H1 (cell line): ENCODE measurements at regions of chr2 and their contacts with region 1.

Region 1: GRCh38 chr2:178414266-178415247 is 36.4 kb downstream of the PRKRA start:
- DNase-seq: peak; percentile 66 to 88
- H3K4me3 ChIP-seq: peak overlapping the region; percentile 42 to 75 (median 62)
- H3K27ac ChIP-seq: no peak overlapping the region
- H3K4me1 ChIP-seq: peaks cover 0 to 2% (median 0%) of the 10 kb centered on the region in 4 experiments; a peak in 1 of 7 replicates
- H3K27me3 ChIP-seq: no peaks in the 10 kb centered on the region
- CTCF ChIP-seq: peak; percentile 91 to 97 (median 93)
- EP300 ChIP-seq: no peak
- POLR2A ChIP-seq: peak in 1 of 2 experiments; percentile 61; a peak in 2 of 3 replicates
- RAD21 ChIP-seq: peak; percentile 85 to 88

Region 2: GRCh38 chr2:178128836-178129630 is 285.5 kb before region 1 on chr2:
- CTCF ChIA-PET with region 1: interaction called, 31 read pairs
- POLR2A ChIA-PET with region 1: no interaction called
- DNase-seq: no peak
- H3K4me3 ChIP-seq: no peak overlapping the region
- H3K27ac ChIP-seq: no peak overlapping the region
- H3K4me1 ChIP-seq: peaks cover 0 to 4% (median 2%) of the 10 kb centered on the region in 4 experiments; a peak in 4 of 7 replicates
- H3K27me3 ChIP-seq: no peaks in the 10 kb centered on the region
- CTCF ChIP-seq: no peak
- EP300 ChIP-seq: no peak
- POLR2A ChIP-seq: no peak
- RAD21 ChIP-seq: no peak

Region 3: DNA sequence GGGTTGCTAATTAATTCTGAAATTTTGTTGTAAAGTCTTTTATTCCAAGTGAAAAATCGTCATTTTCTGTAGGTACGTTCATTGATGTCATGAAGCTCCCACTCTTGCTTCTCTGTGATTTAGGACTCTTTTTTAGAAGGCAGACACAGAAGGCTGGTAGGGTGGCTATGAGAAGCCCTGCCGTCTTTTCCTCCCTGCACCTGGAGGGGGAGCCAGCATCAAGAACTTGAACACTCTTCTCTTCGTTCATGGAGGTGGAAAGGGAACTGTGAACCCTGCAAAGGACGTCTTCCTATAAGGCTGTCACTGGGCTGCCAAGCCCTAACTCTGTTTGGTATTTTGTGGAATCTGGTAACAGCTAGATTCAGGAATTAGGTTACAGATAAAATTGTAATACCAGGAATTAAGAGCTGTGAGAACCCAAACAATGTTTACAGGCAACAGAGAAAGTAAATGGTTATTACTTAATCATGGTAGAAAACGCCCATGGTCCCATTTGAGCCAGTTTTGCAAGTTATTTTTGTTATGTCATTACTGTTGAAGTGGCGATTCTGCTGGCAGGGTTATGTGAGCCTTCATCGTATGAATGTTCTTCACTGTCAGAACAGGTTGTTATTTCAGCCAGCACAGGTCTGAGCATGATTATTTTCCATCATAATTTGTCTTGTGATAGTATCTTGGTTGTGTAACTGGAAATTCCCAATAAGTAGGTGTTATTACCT is 108.0 kb before region 1 on chr2:
- CTCF ChIA-PET with region 1: interaction called, 10 read pairs
- POLR2A ChIA-PET with region 1: interaction called, 3 read pairs
- DNase-seq: peak; percentile 15 to 72
- H3K4me3 ChIP-seq: no peak overlapping the region
- H3K27ac ChIP-seq: no peak overlapping the region
- H3K4me1 ChIP-seq: no peaks in the 10 kb centered on the region; a peak in 1 of 7 replicates
- H3K27me3 ChIP-seq: no peaks in the 10 kb centered on the region
- CTCF ChIP-seq: peak; percentile 70 to 86 (median 75)
- EP300 ChIP-seq: no peak
- POLR2A ChIP-seq: no peak
- RAD21 ChIP-seq: peak; percentile 77 to 81

Region 4: GRCh38 chr2:178404368-178404767 is 10.2 kb before region 1 on chr2:
- CTCF ChIA-PET with region 1: interaction called, 64 read pairs
- POLR2A ChIA-PET with region 1: interaction called, 15 read pairs
- DNase-seq: no peak
- H3K4me3 ChIP-seq: no peak overlapping the region
- H3K27ac ChIP-seq: no peak overlapping the region
- H3K4me1 ChIP-seq: no peaks in the 10 kb centered on the region
- H3K27me3 ChIP-seq: no peaks in the 10 kb centered on the region
- CTCF ChIP-seq: no peak
- EP300 ChIP-seq: no peak
- POLR2A ChIP-seq: no peak
- RAD21 ChIP-seq: no peak

Region 5: GRCh38 chr2:178829299-178829960 is 414.9 kb after region 1 on chr2:
- CTCF ChIA-PET with region 1: no interaction called
- POLR2A ChIA-PET with region 1: no interaction called
- DNase-seq: no peak
- H3K4me3 ChIP-seq: no peak overlapping the region
- H3K27ac ChIP-seq: no peak overlapping the region
- H3K4me1 ChIP-seq: peaks cover 0 to 3% (median 0%) of the 10 kb centered on the region in 4 experiments; a peak in 1 of 7 replicates
- H3K27me3 ChIP-seq: no peaks in the 10 kb centered on the region
- CTCF ChIP-seq: no peak
- EP300 ChIP-seq: no peak
- POLR2A ChIP-seq: no peak
- RAD21 ChIP-seq: no peak